GM12878 (cell line): ENCODE measurements at regions of chr1 and their contacts with region 1.

Region 1: GRCh38 chr1:76294482-76295194 is 220.1 kb downstream of the ST6GALNAC3 start:
- DNase-seq: peak; percentile 48
- ATAC-seq: peak; percentile 91
- H3K4me3 ChIP-seq: no peak overlapping the region
- H3K27ac ChIP-seq: no peak overlapping the region
- H3K4me1 ChIP-seq: no peaks in the 10 kb centered on the region
- H3K27me3 ChIP-seq: peaks cover 0 to 2% of the 10 kb centered on the region in 2 experiments; a peak in 1 of 4 replicates
- CTCF ChIP-seq: no peak
- EP300 ChIP-seq: peak in 1 of 2 experiments; percentile 53; a peak in 1 of 4 replicates
- POLR2A ChIP-seq: no peak
- RAD21 ChIP-seq: no peak

Region 2: DNA sequence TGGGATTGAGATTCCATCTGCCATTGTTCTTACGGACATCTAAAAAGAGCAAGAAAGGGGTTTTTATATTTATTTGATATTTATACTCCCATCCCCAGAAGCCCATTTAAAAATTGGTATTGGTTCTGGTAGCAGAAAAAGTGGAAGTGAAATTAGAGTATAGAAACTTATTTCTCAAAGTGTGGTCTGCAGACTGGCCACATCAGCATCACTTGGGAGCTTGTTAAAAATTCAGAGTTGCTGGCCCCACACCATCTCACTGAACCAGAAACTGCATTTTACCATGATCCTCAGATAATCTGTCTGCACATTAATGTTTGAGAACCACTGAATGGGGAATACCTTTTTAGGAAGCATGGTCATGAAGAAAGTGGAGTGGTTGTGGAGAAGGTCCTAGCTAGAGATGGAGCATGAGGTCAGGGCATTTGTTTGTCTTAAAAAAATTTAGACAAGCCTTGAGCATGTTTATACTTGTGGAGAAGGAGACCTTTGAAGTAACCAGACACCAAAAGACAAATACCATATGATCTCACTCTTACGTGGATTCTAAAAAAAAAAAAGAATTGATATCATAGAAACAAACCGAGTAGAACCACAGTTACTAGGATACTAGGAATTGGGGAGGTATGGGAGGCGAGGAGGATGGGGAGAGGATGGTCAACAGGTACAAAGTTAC is 103.8 kb before region 1 on chr1:
- CTCF ChIA-PET with region 1: no interaction called
- POLR2A ChIA-PET with region 1: no interaction called
- RAD21 ChIA-PET with region 1: no interaction called
- SMC1A ChIA-PET with region 1: interaction called, 3 read pairs
- in situ Hi-C with region 1: no loop called
- intact Hi-C with region 1: loop called (anchors 5 kb)
- DNase-seq: no peak
- ATAC-seq: peak; percentile 96
- H3K4me3 ChIP-seq: no peak overlapping the region
- H3K27ac ChIP-seq: no peak overlapping the region
- H3K4me1 ChIP-seq: peaks cover 4% of the 10 kb centered on the region; the same call in 1 of the 2 replicates
- H3K27me3 ChIP-seq: no peaks in the 10 kb centered on the region; a peak in 1 of 4 replicates
- CTCF ChIP-seq: no peak
- EP300 ChIP-seq: no peak
- POLR2A ChIP-seq: no peak
- RAD21 ChIP-seq: no peak

Region 3: DNA sequence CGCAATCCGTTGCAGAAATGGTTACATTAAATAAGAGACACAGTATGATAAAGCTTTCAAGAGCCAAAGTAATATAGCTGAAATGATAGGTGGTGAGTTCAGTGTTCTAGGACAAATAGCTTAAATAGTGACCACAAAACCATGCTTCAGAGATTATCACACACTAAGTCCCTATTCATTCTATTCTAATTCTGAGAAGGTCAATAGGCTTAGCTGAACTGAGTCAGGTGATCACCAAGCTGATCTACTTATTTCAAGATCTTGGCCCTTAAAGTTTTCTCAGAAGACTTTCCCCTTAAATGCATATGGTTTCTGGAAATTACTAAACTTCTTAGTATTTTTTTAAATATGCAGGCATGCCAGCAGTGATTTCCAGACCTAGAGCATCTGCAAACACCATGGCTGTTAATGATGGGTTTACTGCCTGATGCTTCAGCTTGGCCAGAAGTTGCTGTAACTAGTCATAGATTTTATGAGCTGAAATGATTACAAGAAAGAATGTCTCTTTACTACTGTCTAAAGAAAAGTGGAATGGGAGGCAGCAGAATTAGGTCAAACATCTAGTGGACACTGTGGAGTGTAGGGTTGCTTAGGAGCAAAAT is 22.8 kb after region 1 on chr1:
- CTCF ChIA-PET with region 1: no interaction called
- POLR2A ChIA-PET with region 1: no interaction called
- RAD21 ChIA-PET with region 1: no interaction called
- SMC1A ChIA-PET with region 1: interaction called, 5 read pairs
- in situ Hi-C with region 1: no loop called
- intact Hi-C with region 1: loop called (anchors 2 kb)
- DNase-seq: no peak
- ATAC-seq: no peak
- H3K4me3 ChIP-seq: no peak overlapping the region
- H3K27ac ChIP-seq: no peak overlapping the region
- H3K4me1 ChIP-seq: no peaks in the 10 kb centered on the region
- H3K27me3 ChIP-seq: no peaks in the 10 kb centered on the region; a peak in 1 of 4 replicates
- CTCF ChIP-seq: no peak
- EP300 ChIP-seq: no peak
- POLR2A ChIP-seq: no peak
- RAD21 ChIP-seq: no peak